ENCODE measurements at regions of chr1 and their contacts with region 1.

Region 1: GRCh38 chr1:160291248-160292220 is 6.6 kb upstream of the PEX19 start:
- DNase-seq: peak; percentile 48 to 88 (median 58)
- ATAC-seq: peak; percentile 99
- H3K4me3 ChIP-seq: no peak overlapping the region
- H3K4me3 Mint-ChIP-seq: peak overlapping the region; percentile 5
- H3K27ac ChIP-seq: no peak overlapping the region
- H3K27ac Mint-ChIP-seq: peak overlapping the region; percentile 16
- H3K4me1 ChIP-seq: peaks cover 6% of the 10 kb centered on the region
- H3K4me1 Mint-ChIP-seq: peaks cover 7% of the 10 kb centered on the region
- H3K27me3 ChIP-seq: no peaks in the 10 kb centered on the region
- H3K27me3 Mint-ChIP-seq: no peaks in the 10 kb centered on the region
- CTCF ChIP-seq: peak; percentile 78

Region 2: DNA sequence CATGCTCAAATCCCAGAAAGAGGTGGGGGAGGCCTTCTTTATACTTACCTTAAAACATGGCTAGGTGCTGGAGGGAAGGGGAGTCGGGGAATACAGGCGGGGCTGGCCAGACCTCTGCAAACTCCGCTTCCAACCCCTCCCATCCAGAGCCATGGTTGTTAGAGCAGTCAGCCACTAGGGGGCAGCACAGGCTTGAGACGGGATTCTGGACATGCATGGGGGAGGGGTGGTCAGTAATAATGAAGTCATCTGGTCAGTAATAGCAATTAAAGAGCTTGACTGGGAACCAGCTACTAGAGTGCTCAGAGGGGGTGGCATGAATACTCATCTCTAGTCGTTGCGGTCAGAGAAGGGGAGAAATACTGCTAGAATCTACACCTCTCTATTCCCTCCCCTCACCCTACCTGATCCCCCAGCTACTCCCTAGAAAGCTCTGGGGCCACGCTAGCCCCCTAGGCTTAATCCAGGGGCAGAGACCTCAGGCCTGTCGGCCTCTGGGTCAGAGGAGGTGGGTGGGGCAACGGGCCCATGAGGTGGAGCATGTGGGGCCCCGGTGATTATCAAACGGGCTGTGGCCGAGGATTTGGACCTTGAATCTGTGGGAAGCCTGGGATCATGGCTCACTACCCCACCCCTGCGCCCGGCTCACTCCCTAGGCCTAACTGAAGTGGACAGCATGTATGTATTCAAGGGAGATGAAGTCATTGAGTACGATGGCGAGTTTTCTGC is 98.3 kb before region 1 on chr1:
- CTCF ChIA-PET with region 1: interaction called, 22 read pairs
- POLR2A ChIA-PET with region 1: interaction called, 5 read pairs
- intact Hi-C with region 1: loop called (anchors 1 kb)
- DNase-seq: peak; percentile 62 to 88 (median 78)
- ATAC-seq: peak; percentile 95
- H3K4me3 ChIP-seq: no peak overlapping the region
- H3K4me3 Mint-ChIP-seq: no peak overlapping the region
- H3K27ac ChIP-seq: no peak overlapping the region
- H3K27ac Mint-ChIP-seq: no peak overlapping the region
- H3K4me1 ChIP-seq: peaks cover 7% of the 10 kb centered on the region
- H3K4me1 Mint-ChIP-seq: no peaks in the 10 kb centered on the region
- H3K27me3 ChIP-seq: no peaks in the 10 kb centered on the region
- H3K27me3 Mint-ChIP-seq: no peaks in the 10 kb centered on the region
- CTCF ChIP-seq: peak; percentile 89

Region 3: GRCh38 chr1:160307118-160307854 is 15.8 kb after region 1 on chr1:
- CTCF ChIA-PET with region 1: interaction called, 11 read pairs
- POLR2A ChIA-PET with region 1: no interaction called
- intact Hi-C with region 1: no loop called
- DNase-seq: no peak
- ATAC-seq: no peak
- H3K4me3 ChIP-seq: no peak overlapping the region
- H3K4me3 Mint-ChIP-seq: no peak overlapping the region
- H3K27ac ChIP-seq: no peak overlapping the region
- H3K27ac Mint-ChIP-seq: no peak overlapping the region
- H3K4me1 ChIP-seq: no peaks in the 10 kb centered on the region
- H3K4me1 Mint-ChIP-seq: no peaks in the 10 kb centered on the region
- H3K27me3 ChIP-seq: no peaks in the 10 kb centered on the region
- H3K27me3 Mint-ChIP-seq: no peaks in the 10 kb centered on the region
- CTCF ChIP-seq: no peak

Region 4: GRCh38 chr1:160460683-160461287 is 169.3 kb after region 1 on chr1:
- CTCF ChIA-PET with region 1: no interaction called
- POLR2A ChIA-PET with region 1: no interaction called
- intact Hi-C with region 1: no loop called
- DNase-seq: peak in 3 of 14 experiments; percentile 29 to 38 (median 32)
- ATAC-seq: peak; percentile 41
- H3K4me3 ChIP-seq: peak overlapping the region; percentile 30
- H3K4me3 Mint-ChIP-seq: peak overlapping the region; percentile 57
- H3K27ac ChIP-seq: peak overlapping the region; percentile 33 to 51
- H3K27ac Mint-ChIP-seq: peak overlapping the region; percentile 63
- H3K4me1 ChIP-seq: peaks cover 23% of the 10 kb centered on the region
- H3K4me1 Mint-ChIP-seq: peaks cover 60% of the 10 kb centered on the region
- H3K27me3 ChIP-seq: no peaks in the 10 kb centered on the region
- H3K27me3 Mint-ChIP-seq: no peaks in the 10 kb centered on the region
- CTCF ChIP-seq: no peak

Measured in CD4-positive, alpha-beta T cell (primary cell).